ENCODE measurements at regions of chr1 and their contacts with region 1.

Region 1: GRCh38 chr1:155261852-155262673 is at the start of gene SCAMP3:
- DNase-seq: peak; percentile 99 to 100
- ATAC-seq: peak; percentile 96 to 98
- H3K4me3 ChIP-seq: peak within 1 kb of the TSS; percentile 86
- H3K27ac ChIP-seq: peak within 1 kb of the TSS; percentile 88 to 97
- H3K4me1 ChIP-seq: peaks cover 14% of the 10 kb centered on the region
- CTCF ChIP-seq: no peak
- EP300 ChIP-seq: no peak
- POLR2A ChIP-seq: peak; percentile 84
- RAD21 ChIP-seq: no peak
- polyA plus RNA-seq, gene SCAMP3: 135 and 147 TPM in 2 replicates

Region 2: DNA sequence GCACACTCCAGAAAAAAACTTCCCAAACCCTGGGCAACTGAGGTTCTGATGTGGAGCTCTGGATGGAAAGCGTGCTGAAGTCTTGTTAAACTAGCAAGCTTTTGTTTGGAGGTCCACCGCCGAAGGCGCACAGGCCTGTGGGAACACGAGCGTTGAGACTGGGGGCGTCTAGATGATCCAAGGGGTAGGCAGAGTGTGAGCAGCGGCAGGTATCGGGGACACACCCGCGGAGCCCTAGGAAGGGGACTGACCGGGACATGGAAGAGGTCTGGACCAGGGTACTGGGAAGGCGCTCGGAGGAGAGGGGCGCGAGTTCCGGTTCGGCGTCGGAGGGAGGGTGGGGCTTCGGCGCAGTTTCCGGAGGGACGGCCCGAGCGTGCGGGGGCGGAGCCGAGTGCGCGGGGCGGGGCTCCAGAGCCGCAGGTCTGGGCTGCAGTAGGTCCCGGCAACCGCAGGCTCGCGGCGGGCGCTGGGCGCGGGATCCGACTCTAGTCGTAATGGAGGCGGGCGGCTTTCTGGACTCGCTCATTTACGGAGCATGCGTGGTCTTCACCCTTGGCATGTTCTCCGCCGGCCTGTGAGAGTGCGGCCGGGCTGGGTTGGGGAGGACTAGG is 126.5 kb before region 1 on chr1 and contains the start of gene SLC50A1:
- CTCF ChIA-PET with region 1: no interaction called
- POLR2A ChIA-PET with region 1: no interaction called
- DNase-seq: peak; percentile 91 to 93
- ATAC-seq: peak; percentile 76 to 88
- H3K4me3 ChIP-seq: peak within 1 kb of the TSS; percentile 60
- H3K27ac ChIP-seq: peak within 1 kb of the TSS; percentile 90 to 92
- H3K4me1 ChIP-seq: peaks cover 34% of the 10 kb centered on the region
- CTCF ChIP-seq: no peak
- EP300 ChIP-seq: no peak
- POLR2A ChIP-seq: peak; percentile 77
- RAD21 ChIP-seq: no peak
- polyA plus RNA-seq, gene SLC50A1: 39.3 and 39.4 TPM in 2 replicates

Region 3: DNA sequence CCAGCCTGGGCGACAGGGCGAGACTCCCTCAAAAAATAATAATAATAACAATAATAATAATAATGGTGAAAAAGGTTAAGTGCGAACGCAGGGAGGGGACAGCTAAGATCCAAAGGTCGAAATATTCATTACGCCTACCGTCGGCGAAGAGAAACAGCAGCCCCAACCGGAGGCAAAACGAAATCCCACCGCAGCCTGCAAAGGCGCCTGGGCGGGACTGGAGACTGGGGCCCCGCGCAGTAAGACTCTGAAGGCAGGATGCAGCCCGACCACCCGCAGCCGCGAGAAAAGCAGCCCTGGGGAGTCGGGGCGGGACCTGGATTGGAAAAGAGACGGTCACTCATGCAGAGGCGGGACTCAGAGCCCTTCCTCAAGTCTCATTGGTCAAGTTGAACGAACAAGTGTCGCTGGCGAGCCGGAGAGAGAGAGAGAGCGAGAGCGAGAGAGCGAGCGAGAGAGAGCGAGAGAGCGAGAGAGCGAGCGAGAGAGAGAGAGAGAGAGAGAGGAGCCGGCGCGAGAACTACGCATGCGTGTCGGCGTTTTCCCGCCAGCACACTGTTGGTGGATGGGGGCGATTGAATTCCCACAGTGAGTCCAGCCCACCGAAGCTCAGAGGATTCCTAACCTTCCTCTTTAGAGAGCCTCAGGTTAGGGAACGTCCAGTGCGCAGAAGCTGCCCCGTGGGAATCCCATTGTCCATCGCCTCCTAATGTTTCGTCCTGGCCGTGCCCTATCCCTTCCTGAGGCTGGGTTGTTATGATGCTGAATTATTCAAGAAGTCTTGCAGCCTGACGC is 17.5 kb before region 1 on chr1:
- CTCF ChIA-PET with region 1: interaction called, 326 read pairs
- POLR2A ChIA-PET with region 1: no interaction called
- DNase-seq: peak; percentile 99
- ATAC-seq: peak; percentile 94 to 96
- H3K4me3 ChIP-seq: peak overlapping the region; percentile 59
- H3K27ac ChIP-seq: peak overlapping the region; percentile 82 to 90
- H3K4me1 ChIP-seq: peaks cover 24% of the 10 kb centered on the region
- CTCF ChIP-seq: no peak
- EP300 ChIP-seq: no peak
- POLR2A ChIP-seq: peak; percentile 79
- RAD21 ChIP-seq: 0 out of 5 replicates have a peak, but pooled peaks of 1 of the 2 experiments have one; percentile 16